ENCODE measurements at regions of chr11 and their contacts with region 1.

Region 1: GRCh38 chr11:109612496-109612895 is 190.5 kb downstream of the C11orf87 start:
- DNase-seq: no peak
- H3K4me3 ChIP-seq: no peak overlapping the region
- H3K4me3 Mint-ChIP-seq: no peak overlapping the region
- H3K27ac Mint-ChIP-seq: no peak overlapping the region
- H3K4me1 ChIP-seq: no peaks in the 10 kb centered on the region
- H3K4me1 Mint-ChIP-seq: no peaks in the 10 kb centered on the region
- H3K27me3 ChIP-seq: no peaks in the 10 kb centered on the region
- H3K27me3 Mint-ChIP-seq: peaks cover 9% of the 10 kb centered on the region
- CTCF ChIP-seq: no peak

Region 2: GRCh38 chr11:109435121-109435742 is 177.3 kb before region 1 on chr11:
- CTCF ChIA-PET with region 1: no interaction called
- POLR2A ChIA-PET with region 1: no interaction called
- intact Hi-C with region 1: no loop called
- DNase-seq: no peak
- H3K4me3 ChIP-seq: no peak overlapping the region
- H3K4me3 Mint-ChIP-seq: no peak overlapping the region
- H3K27ac Mint-ChIP-seq: no peak overlapping the region
- H3K4me1 ChIP-seq: no peaks in the 10 kb centered on the region
- H3K4me1 Mint-ChIP-seq: no peaks in the 10 kb centered on the region
- H3K27me3 ChIP-seq: no peaks in the 10 kb centered on the region
- H3K27me3 Mint-ChIP-seq: peaks cover 4% of the 10 kb centered on the region
- CTCF ChIP-seq: no peak

Region 3: GRCh38 chr11:110972640-110973039 is 1360.1 kb after region 1 on chr11:
- CTCF ChIA-PET with region 1: no interaction called
- POLR2A ChIA-PET with region 1: no interaction called
- intact Hi-C with region 1: loop called (anchors 10 kb)
- DNase-seq: no peak
- H3K4me3 ChIP-seq: no peak overlapping the region
- H3K4me3 Mint-ChIP-seq: no peak overlapping the region
- H3K27ac Mint-ChIP-seq: no peak overlapping the region
- H3K4me1 ChIP-seq: no peaks in the 10 kb centered on the region
- H3K4me1 Mint-ChIP-seq: no peaks in the 10 kb centered on the region
- H3K27me3 ChIP-seq: 0 out of 2 replicates have a peak, but pooled peaks cover 1% of the 10 kb centered on the region
- H3K27me3 Mint-ChIP-seq: peaks cover 27% of the 10 kb centered on the region
- CTCF ChIP-seq: no peak